Mammary epithelial cell (primary cell): ENCODE measurements at regions of chr7 and their contacts with region 1.

Region 1: DNA sequence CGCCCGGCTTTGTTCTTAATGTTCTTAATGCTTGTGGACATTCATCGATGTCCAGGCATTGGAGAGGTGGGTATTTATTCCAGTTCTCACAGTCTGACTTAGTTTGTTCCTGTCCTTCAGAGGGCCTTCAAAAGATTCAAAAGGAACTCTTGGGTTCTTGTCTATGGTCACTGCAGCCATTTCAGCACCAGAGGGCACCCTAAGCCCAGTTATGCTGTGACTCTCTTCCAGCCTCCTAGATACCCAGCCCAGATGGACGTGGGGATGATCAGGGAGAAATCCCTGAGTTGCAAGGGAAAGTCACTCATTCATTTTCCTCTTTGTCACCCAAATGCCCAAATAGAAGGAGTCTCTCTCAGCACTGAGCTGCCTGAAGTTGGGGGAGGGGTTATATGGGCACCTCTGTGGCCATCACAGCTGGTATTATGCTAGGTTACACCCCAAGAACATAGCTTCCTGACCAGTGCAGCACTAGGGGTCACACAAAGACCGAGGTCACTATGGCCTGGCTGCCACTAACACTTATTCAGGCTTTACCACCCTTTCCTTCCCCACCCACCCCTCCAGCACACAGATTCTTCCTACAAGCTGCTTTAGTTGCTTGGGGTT is 26.5 kb upstream of the CCDC126 start:
- DNase-seq: peak; percentile 62
- H3K4me3 ChIP-seq: no peak overlapping the region
- H3K27ac ChIP-seq: no peak overlapping the region
- H3K4me1 ChIP-seq: no peaks in the 10 kb centered on the region
- H3K27me3 ChIP-seq: no peaks in the 10 kb centered on the region
- CTCF ChIP-seq: peak; percentile 82 to 87

Region 2: DNA sequence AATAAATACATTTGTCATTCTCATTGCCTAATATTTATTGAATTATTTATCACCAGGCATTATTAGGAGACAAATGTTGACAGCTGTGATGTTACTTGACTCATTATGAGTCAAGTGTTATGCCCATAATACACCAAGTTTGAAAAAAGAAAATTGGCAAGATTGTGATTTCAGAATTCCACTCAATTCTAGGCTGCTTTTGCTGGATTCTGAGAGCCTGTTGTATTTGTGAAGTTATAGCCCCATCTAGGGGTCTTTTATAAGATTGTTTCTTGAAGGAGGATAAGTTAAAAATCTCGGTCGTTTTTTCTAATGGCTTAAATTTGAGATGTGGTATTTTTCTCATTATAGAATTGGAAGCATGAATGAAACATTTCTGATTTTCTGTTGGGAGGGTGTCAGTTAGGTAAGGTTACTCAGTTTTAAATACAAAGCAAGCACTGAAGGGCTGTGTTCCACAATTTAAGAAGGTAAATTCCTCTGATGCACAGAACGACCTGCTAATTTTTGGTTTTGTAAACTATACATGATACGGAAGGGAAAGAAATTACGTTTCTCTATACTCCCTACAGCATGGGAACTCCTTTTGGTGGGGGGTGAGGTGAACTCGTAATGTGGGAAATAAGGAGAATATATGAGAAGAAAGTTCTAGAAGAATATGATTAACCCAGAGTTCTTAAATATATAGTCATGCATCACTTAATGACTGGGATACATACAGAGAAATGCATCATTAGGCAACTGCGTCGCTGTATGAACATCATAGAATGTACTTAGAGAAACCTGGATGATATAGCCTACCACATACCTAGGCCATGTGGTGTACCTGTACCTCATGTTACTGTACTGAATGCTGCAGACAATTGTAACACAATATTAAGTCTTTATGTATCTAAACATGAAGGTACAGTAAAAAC is 141.9 kb after region 1 on chr7:
- CTCF ChIA-PET with region 1: no interaction called
- dilution Hi-C with region 1: no loop called
- in situ Hi-C with region 1: loop called (anchors 5 to 10 kb)
- intact Hi-C with region 1: loop called (anchors 1 kb)
- DNase-seq: peak; percentile 60
- H3K4me3 ChIP-seq: no peak overlapping the region
- H3K27ac ChIP-seq: no peak overlapping the region
- H3K4me1 ChIP-seq: peaks cover 20% of the 10 kb centered on the region
- H3K27me3 ChIP-seq: no peaks in the 10 kb centered on the region
- CTCF ChIP-seq: peak; percentile 35 to 46

Region 3: GRCh38 chr7:24283897-24284698 is 713.4 kb after region 1 on chr7 and contains the start of gene NPY:
- CTCF ChIA-PET with region 1: no interaction called
- dilution Hi-C with region 1: no loop called
- in situ Hi-C with region 1: no loop called
- intact Hi-C with region 1: loop called (anchors 10 kb)
- DNase-seq: no peak
- H3K4me3 ChIP-seq: no peak within 1 kb of the TSS
- H3K27ac ChIP-seq: no peak within 1 kb of the TSS
- H3K4me1 ChIP-seq: peaks cover 3% of the 10 kb centered on the region
- H3K27me3 ChIP-seq: peaks cover 33% of the 10 kb centered on the region
- CTCF ChIP-seq: no peak
- total RNA-seq, gene NPY: not detected

Region 4: GRCh38 chr7:24336461-24336860 is 765.8 kb after region 1 on chr7:
- CTCF ChIA-PET with region 1: no interaction called
- dilution Hi-C with region 1: no loop called
- in situ Hi-C with region 1: no loop called
- intact Hi-C with region 1: no loop called
- DNase-seq: no peak
- H3K4me3 ChIP-seq: no peak overlapping the region
- H3K27ac ChIP-seq: no peak overlapping the region
- H3K4me1 ChIP-seq: no peaks in the 10 kb centered on the region
- H3K27me3 ChIP-seq: peaks cover 4% of the 10 kb centered on the region
- CTCF ChIP-seq: no peak

Region 5: DNA sequence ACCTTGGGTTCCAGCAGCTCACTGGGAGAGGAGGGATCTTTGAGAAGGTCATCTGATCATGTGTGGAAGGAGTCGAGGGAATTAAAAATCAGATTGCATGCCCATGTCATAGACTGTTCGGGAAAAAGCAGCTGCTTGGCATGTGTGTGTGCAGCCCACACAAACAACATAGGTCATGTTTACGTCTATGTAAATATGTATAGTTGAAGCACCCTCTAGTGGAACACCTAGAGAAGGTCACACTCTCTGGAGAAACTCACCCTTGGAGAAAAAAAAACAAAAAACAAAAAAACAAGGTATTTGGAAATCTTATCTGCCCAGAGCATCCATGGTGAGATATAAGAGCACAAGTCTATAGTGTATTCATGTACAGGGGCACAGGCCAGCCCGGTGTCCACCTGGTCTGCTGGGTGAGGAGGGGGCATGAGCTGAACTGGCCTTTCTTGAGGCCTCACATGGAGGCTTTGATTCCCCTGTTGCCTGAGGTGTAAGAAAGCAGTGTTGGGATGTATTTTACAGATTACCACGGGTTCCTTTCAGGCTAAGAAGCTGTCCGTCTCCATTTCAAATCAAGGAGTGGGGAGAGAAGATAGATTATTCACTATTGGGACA is 811.3 kb after region 1 on chr7:
- CTCF ChIA-PET with region 1: interaction called, 3 read pairs
- dilution Hi-C with region 1: no loop called
- in situ Hi-C with region 1: no loop called
- intact Hi-C with region 1: loop called (anchors 1 kb)
- DNase-seq: peak; percentile 12
- H3K4me3 ChIP-seq: no peak overlapping the region
- H3K27ac ChIP-seq: no peak overlapping the region
- H3K4me1 ChIP-seq: peaks cover 16% of the 10 kb centered on the region
- H3K27me3 ChIP-seq: no peaks in the 10 kb centered on the region
- CTCF ChIP-seq: peak; percentile 61 to 68